Naive thymus-derived CD4-positive, alpha-beta T cell (primary cell): ENCODE measurements at regions of chr1 and their contacts with region 1.

Region 1: DNA sequence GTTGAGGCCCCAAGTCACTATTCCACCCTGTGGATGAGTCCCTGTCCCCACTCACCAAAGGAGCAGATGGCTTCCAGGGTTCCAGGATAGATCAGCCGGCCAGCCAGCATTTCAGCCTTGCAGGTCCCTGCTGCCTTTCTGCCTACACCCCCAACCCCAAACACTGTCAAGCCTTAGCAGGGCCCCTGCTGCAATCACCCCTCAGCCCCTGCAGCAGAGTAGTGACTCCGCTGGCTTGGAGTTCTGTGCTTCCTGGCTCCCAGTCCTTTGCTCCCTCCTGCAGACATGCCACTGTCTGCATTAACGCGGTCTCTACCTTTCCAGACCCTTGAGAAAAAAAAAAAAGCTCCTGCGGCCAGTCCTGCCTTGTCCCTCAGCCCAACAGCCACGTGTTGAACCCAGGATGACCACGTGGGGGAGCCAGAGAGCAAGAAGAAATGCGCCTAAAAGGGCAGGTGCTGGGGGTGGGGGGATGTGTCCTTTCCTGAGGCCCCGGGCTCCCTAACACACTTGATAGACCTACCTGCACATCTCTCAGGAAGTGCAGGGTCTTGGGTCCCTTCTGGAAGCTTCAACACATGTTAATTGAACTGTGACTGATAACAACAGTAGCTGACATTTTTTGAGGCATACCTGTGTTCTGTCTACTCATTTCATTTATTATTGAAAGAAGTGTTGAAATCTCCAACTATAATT is 37.4 kb downstream of the RASSF5 start:
- DNase-seq: peak; percentile 58 to 86 (median 77)
- ATAC-seq: peak; percentile 94
- H3K4me3 ChIP-seq: no peak overlapping the region
- H3K4me3 Mint-ChIP-seq: no peak overlapping the region
- H3K27ac ChIP-seq: no peak overlapping the region
- H3K27ac Mint-ChIP-seq: peak overlapping the region in 7 of 9 donors; percentile 17 to 63 (median 49)
- H3K4me1 ChIP-seq: peaks cover 4 to 9% of the 10 kb centered on the region in 2 donors
- H3K4me1 Mint-ChIP-seq: peaks cover 12 to 26% (median 19%) of the 10 kb centered on the region in 7 donors
- H3K27me3 ChIP-seq: no peaks in the 10 kb centered on the region
- H3K27me3 Mint-ChIP-seq: no peaks in the 10 kb centered on the region

Region 2: DNA sequence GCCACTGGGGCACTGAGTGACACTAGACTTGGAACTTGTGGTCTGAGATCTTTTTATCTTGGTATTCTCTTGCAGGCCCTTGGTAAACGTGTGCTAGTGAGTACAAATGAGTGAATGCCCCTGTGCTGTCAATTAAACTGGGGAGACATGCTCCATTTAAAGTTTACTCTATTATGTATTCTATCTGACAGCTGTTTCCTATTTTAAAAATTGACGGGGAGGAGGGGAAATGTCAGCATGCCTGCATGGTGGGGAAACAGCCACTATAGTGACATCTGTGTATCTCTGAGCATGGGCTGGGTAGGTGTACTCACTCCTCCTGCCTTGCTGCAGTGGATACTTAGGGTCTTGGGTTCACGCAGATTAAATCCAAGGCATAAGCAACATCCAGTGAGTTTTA is 133.4 kb before region 1 on chr1:
- CTCF ChIA-PET with region 1: no interaction called
- POLR2A ChIA-PET with region 1: no interaction called
- intact Hi-C with region 1: no loop called
- DNase-seq: no peak
- ATAC-seq: no peak
- H3K4me3 ChIP-seq: no peak overlapping the region
- H3K4me3 Mint-ChIP-seq: no peak overlapping the region
- H3K27ac ChIP-seq: no peak overlapping the region
- H3K27ac Mint-ChIP-seq: no peak overlapping the region
- H3K4me1 ChIP-seq: no peaks in the 10 kb centered on the region
- H3K4me1 Mint-ChIP-seq: peaks cover 0 to 4% (median 0%) of the 10 kb centered on the region in 7 donors
- H3K27me3 ChIP-seq: no peaks in the 10 kb centered on the region
- H3K27me3 Mint-ChIP-seq: no peaks in the 10 kb centered on the region

Region 3: GRCh38 chr1:206461602-206462455 is 82.9 kb before region 1 on chr1:
- CTCF ChIA-PET with region 1: interaction called, 7 read pairs
- POLR2A ChIA-PET with region 1: no interaction called
- intact Hi-C with region 1: loop called in 1 of 2 experiments (anchors 1 kb)
- DNase-seq: peak in 8 of 9 donors; percentile 59 to 72 (median 66)
- ATAC-seq: peak; percentile 84
- H3K4me3 ChIP-seq: no peak overlapping the region
- H3K4me3 Mint-ChIP-seq: peak overlapping the region in 1 of 10 donors; percentile 38
- H3K27ac ChIP-seq: no peak overlapping the region
- H3K27ac Mint-ChIP-seq: peak overlapping the region in 1 of 9 donors; percentile 38
- H3K4me1 ChIP-seq: peaks cover 10 to 16% of the 10 kb centered on the region in 2 donors
- H3K4me1 Mint-ChIP-seq: peaks cover 20 to 48% (median 31%) of the 10 kb centered on the region in 7 donors
- H3K27me3 ChIP-seq: no peaks in the 10 kb centered on the region
- H3K27me3 Mint-ChIP-seq: no peaks in the 10 kb centered on the region

Region 4: GRCh38 chr1:206507284-206508129 is 37.2 kb before region 1 on chr1 and contains the start of gene RASSF5:
- CTCF ChIA-PET with region 1: no interaction called
- POLR2A ChIA-PET with region 1: interaction called, 3 read pairs
- intact Hi-C with region 1: loop called in 1 of 2 experiments (anchors 1 kb)
- DNase-seq: peak; percentile 64 to 86 (median 74)
- ATAC-seq: peak; percentile 88
- H3K4me3 ChIP-seq: peak within 1 kb of the TSS; percentile 58
- H3K4me3 Mint-ChIP-seq: peak within 1 kb of the TSS; percentile 72 to 90 (median 82)
- H3K27ac ChIP-seq: peak within 1 kb of the TSS; percentile 41
- H3K27ac Mint-ChIP-seq: peak within 1 kb of the TSS in 8 of 9 donors; percentile 28 to 69 (median 51)
- H3K4me1 ChIP-seq: peaks cover 8 to 29% of the 10 kb centered on the region in 2 donors
- H3K4me1 Mint-ChIP-seq: peaks cover 8 to 59% (median 29%) of the 10 kb centered on the region in 7 donors
- H3K27me3 ChIP-seq: no peaks in the 10 kb centered on the region
- H3K27me3 Mint-ChIP-seq: peaks cover 12 to 30% (median 18%) of the 10 kb centered on the region in 5 donors
- total RNA-seq, gene RASSF5: 155 to 240 (median 218) TPM

Region 5: GRCh38 chr1:206556750-206557635 is 12.3 kb after region 1 on chr1:
- CTCF ChIA-PET with region 1: interaction called, 36 read pairs
- POLR2A ChIA-PET with region 1: interaction called, 722 read pairs
- intact Hi-C with region 1: loop called (anchors 1 to 2 kb)
- DNase-seq: peak; percentile 78 to 93 (median 88)
- ATAC-seq: peak; percentile 86
- H3K4me3 ChIP-seq: peak overlapping the region; percentile 90
- H3K4me3 Mint-ChIP-seq: peak overlapping the region; percentile 77 to 99 (median 96)
- H3K27ac ChIP-seq: peak overlapping the region; percentile 90
- H3K27ac Mint-ChIP-seq: peak overlapping the region; percentile 86 to 100 (median 94)
- H3K4me1 ChIP-seq: peaks cover 61 to 66% of the 10 kb centered on the region in 2 donors
- H3K4me1 Mint-ChIP-seq: peaks cover 59 to 75% (median 70%) of the 10 kb centered on the region in 7 donors
- H3K27me3 ChIP-seq: no peaks in the 10 kb centered on the region
- H3K27me3 Mint-ChIP-seq: no peaks in the 10 kb centered on the region

Region 6: GRCh38 chr1:206563367-206564207 is 18.9 kb after region 1 on chr1:
- CTCF ChIA-PET with region 1: interaction called, 22 read pairs
- POLR2A ChIA-PET with region 1: interaction called, 722 read pairs
- intact Hi-C with region 1: loop called (anchors 1 to 2 kb)
- DNase-seq: no peak
- ATAC-seq: peak; percentile 6
- H3K4me3 ChIP-seq: peak overlapping the region; percentile 44
- H3K4me3 Mint-ChIP-seq: peak overlapping the region; percentile 77 to 99 (median 87)
- H3K27ac ChIP-seq: peak overlapping the region; percentile 90
- H3K27ac Mint-ChIP-seq: peak overlapping the region; percentile 86 to 100 (median 92)
- H3K4me1 ChIP-seq: peaks cover 88 to 90% of the 10 kb centered on the region in 2 donors
- H3K4me1 Mint-ChIP-seq: peaks cover 75 to 96% (median 91%) of the 10 kb centered on the region in 7 donors
- H3K27me3 ChIP-seq: no peaks in the 10 kb centered on the region
- H3K27me3 Mint-ChIP-seq: no peaks in the 10 kb centered on the region

Region 7: GRCh38 chr1:206575165-206575893 is 30.6 kb after region 1 on chr1:
- CTCF ChIA-PET with region 1: interaction called, 424 read pairs
- POLR2A ChIA-PET with region 1: interaction called, 722 read pairs
- intact Hi-C with region 1: no loop called
- DNase-seq: peak in 7 of 9 donors; percentile 73 to 86 (median 82)
- ATAC-seq: peak; percentile 75
- H3K4me3 ChIP-seq: peak overlapping the region; percentile 33
- H3K4me3 Mint-ChIP-seq: peak overlapping the region; percentile 68 to 88 (median 79)
- H3K27ac ChIP-seq: peak overlapping the region; percentile 90
- H3K27ac Mint-ChIP-seq: peak overlapping the region; percentile 81 to 100 (median 91)
- H3K4me1 ChIP-seq: peaks cover 98% of the 10 kb centered on the region in 2 donors
- H3K4me1 Mint-ChIP-seq: peaks cover 79 to 100% (median 96%) of the 10 kb centered on the region in 7 donors
- H3K27me3 ChIP-seq: no peaks in the 10 kb centered on the region
- H3K27me3 Mint-ChIP-seq: no peaks in the 10 kb centered on the region

Region 8: GRCh38 chr1:206590025-206590758 is 45.5 kb after region 1 on chr1:
- CTCF ChIA-PET with region 1: interaction called, 424 read pairs
- POLR2A ChIA-PET with region 1: interaction called, 722 read pairs
- intact Hi-C with region 1: no loop called
- DNase-seq: peak in 3 of 9 donors; percentile 31 to 60 (median 36)
- ATAC-seq: peak; percentile 84
- H3K4me3 ChIP-seq: no peak overlapping the region
- H3K4me3 Mint-ChIP-seq: peak overlapping the region in 2 of 10 donors; percentile 70 to 75
- H3K27ac ChIP-seq: peak overlapping the region; percentile 28
- H3K27ac Mint-ChIP-seq: peak overlapping the region; percentile 27 to 91 (median 80)
- H3K4me1 ChIP-seq: peaks cover 7 to 19% of the 10 kb centered on the region in 2 donors
- H3K4me1 Mint-ChIP-seq: peaks cover 21 to 70% (median 45%) of the 10 kb centered on the region in 7 donors
- H3K27me3 ChIP-seq: no peaks in the 10 kb centered on the region
- H3K27me3 Mint-ChIP-seq: no peaks in the 10 kb centered on the region